ENCODE measurements at regions of chr3 and their contacts with region 1.

Region 1: GRCh38 chr3:41961750-41962679 is at the start of gene ULK4:
- DNase-seq: peak; percentile 91
- ATAC-seq: peak; percentile 88
- H3K4me3 Mint-ChIP-seq: peak within 1 kb of the TSS; percentile 97
- H3K27ac Mint-ChIP-seq: peak within 1 kb of the TSS; percentile 96
- H3K4me1 Mint-ChIP-seq: peaks cover 14% of the 10 kb centered on the region
- H3K27me3 Mint-ChIP-seq: no peaks in the 10 kb centered on the region
- CTCF ChIP-seq: no peak
- total RNA-seq, gene ULK4: 16.8 and 18.6 TPM in 2 replicates

Region 2: GRCh38 chr3:40452876-40453730 is 1508.9 kb before region 1 on chr3:
- CTCF ChIA-PET with region 1: no interaction called
- POLR2A ChIA-PET with region 1: no interaction called
- intact Hi-C with region 1: loop called (anchors 1 kb)
- DNase-seq: peak; percentile 81
- ATAC-seq: peak; percentile 92
- H3K4me3 Mint-ChIP-seq: peak overlapping the region; percentile 96
- H3K27ac Mint-ChIP-seq: peak overlapping the region; percentile 98
- H3K4me1 Mint-ChIP-seq: peaks cover 36% of the 10 kb centered on the region
- H3K27me3 Mint-ChIP-seq: no peaks in the 10 kb centered on the region
- CTCF ChIP-seq: no peak

Region 3: DNA sequence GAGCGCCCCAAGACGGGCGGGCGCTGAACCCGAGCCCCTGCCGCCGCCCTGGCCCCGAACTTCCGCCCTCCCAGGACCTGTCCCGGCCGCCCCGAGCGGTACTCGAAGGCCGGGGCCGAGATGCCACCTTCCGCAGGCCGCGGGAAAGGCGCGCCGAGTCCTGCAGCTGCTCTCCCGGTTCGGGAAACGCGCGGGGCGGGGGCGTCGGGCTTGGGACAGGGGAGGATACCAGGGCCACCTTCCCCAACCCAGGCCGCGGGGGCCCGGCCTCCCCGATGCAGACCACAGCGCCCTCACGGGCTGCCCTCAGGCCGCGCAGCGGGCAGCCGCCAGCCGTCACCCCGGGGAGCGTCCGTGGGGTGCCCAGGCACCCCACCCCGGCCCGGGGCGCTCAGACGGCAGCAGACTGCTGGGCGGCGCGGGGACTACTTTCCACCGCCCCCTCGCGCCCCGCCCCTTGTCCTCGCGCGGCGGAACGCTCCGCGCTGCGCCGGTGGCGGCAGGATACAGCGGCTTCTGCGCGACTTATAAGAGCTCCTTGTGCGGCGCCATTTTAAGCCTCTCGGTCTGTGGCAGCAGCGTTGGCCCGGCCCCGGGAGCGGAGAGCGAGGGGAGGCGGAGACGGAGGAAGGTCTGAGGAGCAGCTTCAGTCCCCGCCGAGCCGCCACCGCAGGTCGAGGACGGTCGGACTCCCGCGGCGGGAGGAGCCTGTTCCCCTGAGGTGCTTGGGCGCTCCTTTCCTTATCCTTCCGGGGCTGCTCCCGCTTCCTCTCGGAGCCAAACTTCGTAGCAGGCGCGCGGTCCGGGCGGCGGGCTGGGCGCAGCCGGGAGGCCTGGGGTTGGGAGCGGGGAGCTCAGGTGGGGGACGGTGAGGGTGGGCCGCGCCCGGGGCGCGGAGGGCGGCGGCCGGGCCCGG is 762.8 kb before region 1 on chr3 and contains the start of gene CTNNB1:
- CTCF ChIA-PET with region 1: no interaction called
- POLR2A ChIA-PET with region 1: interaction called, 10 read pairs
- intact Hi-C with region 1: loop called (anchors 2 kb)
- DNase-seq: peak; percentile 91
- ATAC-seq: peak; percentile 80
- H3K4me3 Mint-ChIP-seq: peak within 1 kb of the TSS; percentile 94
- H3K27ac Mint-ChIP-seq: peak within 1 kb of the TSS; percentile 96
- H3K4me1 Mint-ChIP-seq: peaks cover 40% of the 10 kb centered on the region
- H3K27me3 Mint-ChIP-seq: peaks cover 4% of the 10 kb centered on the region
- CTCF ChIP-seq: no peak
- total RNA-seq, gene CTNNB1: 155 and 164 TPM in 2 replicates

Region 4: DNA sequence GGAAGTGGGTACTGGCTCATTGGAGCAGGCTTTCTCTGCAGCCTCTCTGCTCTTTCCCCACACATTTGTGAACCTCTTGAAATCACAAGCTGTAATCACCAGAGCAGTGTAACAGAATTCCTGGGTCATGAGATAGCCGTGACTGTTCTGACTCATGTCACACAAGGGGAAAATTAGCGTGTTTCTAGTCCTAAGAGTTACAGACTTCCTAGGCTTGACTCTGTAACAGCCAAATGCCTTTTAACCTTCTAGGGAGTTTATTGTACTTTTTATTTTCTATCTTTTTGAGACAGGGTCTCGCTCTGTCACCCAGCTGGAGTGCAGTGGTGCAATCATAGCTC is 74.4 kb after region 1 on chr3:
- CTCF ChIA-PET with region 1: no interaction called
- POLR2A ChIA-PET with region 1: interaction called, 3 read pairs
- intact Hi-C with region 1: loop called (anchors 2 kb)
- DNase-seq: no peak
- ATAC-seq: peak; percentile 51
- H3K4me3 Mint-ChIP-seq: peak overlapping the region; percentile 55
- H3K27ac Mint-ChIP-seq: peak overlapping the region; percentile 86
- H3K4me1 Mint-ChIP-seq: peaks cover 90% of the 10 kb centered on the region
- H3K27me3 Mint-ChIP-seq: no peaks in the 10 kb centered on the region
- CTCF ChIP-seq: no peak

Region 5: GRCh38 chr3:42090973-42091731 is 129.1 kb after region 1 on chr3 and contains the start of gene TRAK1:
- CTCF ChIA-PET with region 1: interaction called, 4 read pairs
- POLR2A ChIA-PET with region 1: interaction called, 19 read pairs
- intact Hi-C with region 1: no loop called
- DNase-seq: no peak
- ATAC-seq: no peak
- H3K4me3 Mint-ChIP-seq: peak within 1 kb of the TSS; percentile 29
- H3K27ac Mint-ChIP-seq: peak within 1 kb of the TSS; percentile 86
- H3K4me1 Mint-ChIP-seq: peaks cover 82% of the 10 kb centered on the region
- H3K27me3 Mint-ChIP-seq: no peaks in the 10 kb centered on the region
- CTCF ChIP-seq: no peak
- total RNA-seq, gene TRAK1: 54.5 and 58.4 TPM in 2 replicates

Region 6: GRCh38 chr3:42600111-42600988 is 638.3 kb after region 1 on chr3 and contains the start of gene NKTR:
- CTCF ChIA-PET with region 1: no interaction called
- POLR2A ChIA-PET with region 1: no interaction called
- intact Hi-C with region 1: loop called (anchors 5 kb)
- DNase-seq: peak; percentile 98
- ATAC-seq: peak; percentile 92
- H3K4me3 Mint-ChIP-seq: peak within 1 kb of the TSS; percentile 91
- H3K27ac Mint-ChIP-seq: peak within 1 kb of the TSS; percentile 96
- H3K4me1 Mint-ChIP-seq: peaks cover 34% of the 10 kb centered on the region
- H3K27me3 Mint-ChIP-seq: no peaks in the 10 kb centered on the region
- CTCF ChIP-seq: no peak
- total RNA-seq, gene NKTR: 107 and 126 TPM in 2 replicates

Measured in activated B cell treated with CpG ODN at 0.5 μM for 24 hours (primary cell).